PC-9 (cell line): ENCODE measurements at regions of chr2 and their contacts with region 1.

Region 1: DNA sequence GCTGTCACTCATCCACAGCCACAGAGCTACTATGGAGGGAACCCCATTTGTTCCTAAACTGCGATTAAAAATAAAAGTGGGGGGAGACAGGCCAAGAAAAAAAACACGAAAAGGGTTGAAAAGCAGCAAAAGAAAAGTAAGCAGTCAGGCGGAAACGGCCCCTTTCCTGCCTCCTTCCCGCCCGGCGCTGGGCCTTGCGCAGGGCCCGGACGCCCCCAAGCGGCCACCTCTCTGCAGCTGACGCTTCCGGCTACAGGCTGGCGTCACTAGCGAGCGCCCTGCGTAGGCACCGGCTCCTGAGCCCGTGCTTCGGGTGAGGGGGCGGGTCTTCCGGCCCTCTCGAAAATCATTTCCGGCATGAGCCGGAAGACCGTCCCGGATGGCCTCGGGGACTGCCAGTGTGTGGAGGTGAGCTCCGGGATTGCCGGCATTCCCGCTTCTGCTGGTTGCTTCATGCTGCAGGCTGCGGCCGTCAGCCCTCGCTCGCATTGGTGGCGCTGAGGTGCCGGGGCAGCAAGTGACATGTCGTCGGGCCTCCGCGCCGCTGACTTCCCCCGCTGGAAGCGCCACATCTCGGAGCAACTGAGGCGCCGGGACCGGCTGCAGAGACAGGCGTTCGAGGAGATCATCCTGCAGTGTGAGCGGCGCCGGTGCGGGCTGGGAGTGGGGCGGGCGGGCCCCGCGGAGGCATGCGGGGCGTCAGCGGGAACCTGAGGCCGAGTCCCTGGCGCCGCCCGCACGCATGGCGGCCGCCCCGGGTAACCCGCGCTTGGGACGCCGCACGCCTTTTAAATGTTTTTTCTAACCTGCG is at the start of gene ATG16L1:
- DNase-seq: peak; percentile 96 to 99
- H3K4me3 ChIP-seq: peak within 1 kb of the TSS; percentile 94
- H3K27ac ChIP-seq: peak within 1 kb of the TSS; percentile 62
- H3K4me1 ChIP-seq: peaks cover 58% of the 10 kb centered on the region
- H3K27me3 ChIP-seq: no peaks in the 10 kb centered on the region
- CTCF ChIP-seq: peak; percentile 94
- total RNA-seq, gene ATG16L1: 55.7 and 63.9 TPM in 2 replicates

Region 2: GRCh38 chr2:232611551-232612218 is 639.8 kb before region 1 on chr2:
- CTCF ChIA-PET with region 1: interaction called, 3 read pairs
- POLR2A ChIA-PET with region 1: no interaction called
- intact Hi-C with region 1: loop called (anchors 5 kb)
- DNase-seq: peak; percentile 94 to 97
- H3K4me3 ChIP-seq: no peak overlapping the region
- H3K27ac ChIP-seq: peak overlapping the region; percentile 25
- H3K4me1 ChIP-seq: peaks cover 46% of the 10 kb centered on the region
- H3K27me3 ChIP-seq: no peaks in the 10 kb centered on the region
- CTCF ChIP-seq: peak; percentile 98

Region 3: DNA sequence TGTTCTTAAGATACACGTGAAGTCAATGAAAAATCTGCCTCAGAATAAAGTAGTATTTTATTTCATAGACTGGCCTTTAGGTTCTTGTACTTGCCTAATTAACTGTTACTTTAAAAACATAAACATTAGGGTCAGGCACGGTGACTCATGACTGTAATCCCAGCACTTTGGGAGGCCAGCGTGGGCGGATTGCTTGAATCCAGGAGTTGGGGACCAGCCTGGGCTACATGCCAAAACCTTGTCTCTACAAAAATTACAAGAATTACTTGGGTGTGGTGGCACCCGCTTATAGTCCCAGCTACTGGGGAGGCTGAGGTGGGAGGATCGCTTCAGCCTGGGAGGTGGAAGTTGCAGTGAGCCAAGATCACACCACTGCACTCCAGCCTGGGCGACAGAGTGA is 397.4 kb before region 1 on chr2:
- CTCF ChIA-PET with region 1: interaction called, 4 read pairs
- POLR2A ChIA-PET with region 1: interaction called, 5 read pairs
- intact Hi-C with region 1: loop called (anchors 1 kb)
- DNase-seq: peak; percentile 89 to 92
- H3K4me3 ChIP-seq: no peak overlapping the region
- H3K27ac ChIP-seq: peak overlapping the region; percentile 97
- H3K4me1 ChIP-seq: peaks cover 53% of the 10 kb centered on the region
- H3K27me3 ChIP-seq: no peaks in the 10 kb centered on the region
- CTCF ChIP-seq: no peak

Region 4: GRCh38 chr2:233026192-233026813 is 225.2 kb before region 1 on chr2:
- CTCF ChIA-PET with region 1: no interaction called
- POLR2A ChIA-PET with region 1: no interaction called
- intact Hi-C with region 1: loop called (anchors 1 kb)
- DNase-seq: peak; percentile 69 to 97
- H3K4me3 ChIP-seq: no peak overlapping the region
- H3K27ac ChIP-seq: peak overlapping the region; percentile 72
- H3K4me1 ChIP-seq: peaks cover 45% of the 10 kb centered on the region
- H3K27me3 ChIP-seq: no peaks in the 10 kb centered on the region
- CTCF ChIP-seq: peak; percentile 51

Region 5: DNA sequence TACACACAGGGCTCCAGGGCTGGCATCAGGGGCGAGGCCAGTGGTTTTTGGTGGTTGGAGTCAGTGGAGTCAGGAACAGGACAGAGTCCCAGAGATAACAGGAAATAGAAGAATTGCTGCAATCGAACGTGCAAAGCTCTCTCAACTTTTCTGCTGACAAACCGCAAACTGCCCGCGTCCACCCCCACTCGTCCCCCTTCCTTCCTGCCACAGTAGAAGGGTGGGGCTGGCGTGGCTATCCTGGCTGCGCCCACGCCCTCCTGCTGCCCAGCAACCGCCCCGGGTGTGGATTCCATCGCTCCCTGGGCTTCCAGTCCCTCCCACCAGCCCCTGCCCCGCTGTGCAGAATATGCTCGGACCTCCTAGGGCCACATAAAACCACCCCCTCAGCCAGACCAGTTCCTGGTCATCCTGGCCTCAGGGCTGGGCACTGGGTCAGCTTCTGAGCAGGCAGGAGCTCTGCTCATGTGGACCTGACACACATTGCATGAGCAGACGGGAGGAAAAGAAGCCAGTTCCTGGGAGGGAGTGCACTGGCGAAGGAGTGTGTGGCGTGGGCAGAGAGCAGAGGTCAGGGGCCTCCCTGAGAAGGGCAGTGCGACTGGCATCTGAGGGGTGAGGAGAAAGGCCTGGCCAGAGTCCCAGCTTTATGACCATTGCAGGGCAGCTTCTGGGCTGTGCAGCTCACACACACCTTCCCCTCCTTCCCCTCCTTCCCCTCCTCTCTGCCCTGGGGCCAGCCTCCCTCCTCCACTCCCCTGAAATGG is 85.4 kb before region 1 on chr2:
- CTCF ChIA-PET with region 1: no interaction called
- POLR2A ChIA-PET with region 1: no interaction called
- intact Hi-C with region 1: loop called (anchors 1 kb)
- DNase-seq: peak; percentile 97 to 99
- H3K4me3 ChIP-seq: no peak overlapping the region
- H3K27ac ChIP-seq: peak overlapping the region; percentile 76
- H3K4me1 ChIP-seq: peaks cover 53% of the 10 kb centered on the region
- H3K27me3 ChIP-seq: no peaks in the 10 kb centered on the region
- CTCF ChIP-seq: no peak

Region 6: GRCh38 chr2:233690435-233690834 is 438.9 kb after region 1 on chr2:
- CTCF ChIA-PET with region 1: no interaction called
- POLR2A ChIA-PET with region 1: no interaction called
- intact Hi-C with region 1: loop called (anchors 5 kb)
- DNase-seq: peak; percentile 96 to 99
- H3K4me3 ChIP-seq: peak overlapping the region; percentile 69; the same call in 1 of the 2 replicates
- H3K27ac ChIP-seq: peak overlapping the region; percentile 97
- H3K4me1 ChIP-seq: peaks cover 37% of the 10 kb centered on the region
- H3K27me3 ChIP-seq: no peaks in the 10 kb centered on the region
- CTCF ChIP-seq: no peak